IMR-90 (cell line): ENCODE measurements at regions of chr5 and their contacts with region 1.

Region 1: GRCh38 chr5:142611154-142611553 is 74.7 kb downstream of the FGF1 start:
- DNase-seq: peak; percentile 74
- ATAC-seq: peak; percentile 86
- H3K4me3 ChIP-seq: no peak overlapping the region
- H3K27ac ChIP-seq: no peak overlapping the region
- H3K4me1 ChIP-seq: peaks cover 16% of the 10 kb centered on the region
- H3K27me3 ChIP-seq: no peaks in the 10 kb centered on the region
- CTCF ChIP-seq: peak; percentile 96
- POLR2A ChIP-seq: peak; percentile 36; the same call in 1 of the 2 replicates
- RAD21 ChIP-seq: peak; percentile 96

Region 2: DNA sequence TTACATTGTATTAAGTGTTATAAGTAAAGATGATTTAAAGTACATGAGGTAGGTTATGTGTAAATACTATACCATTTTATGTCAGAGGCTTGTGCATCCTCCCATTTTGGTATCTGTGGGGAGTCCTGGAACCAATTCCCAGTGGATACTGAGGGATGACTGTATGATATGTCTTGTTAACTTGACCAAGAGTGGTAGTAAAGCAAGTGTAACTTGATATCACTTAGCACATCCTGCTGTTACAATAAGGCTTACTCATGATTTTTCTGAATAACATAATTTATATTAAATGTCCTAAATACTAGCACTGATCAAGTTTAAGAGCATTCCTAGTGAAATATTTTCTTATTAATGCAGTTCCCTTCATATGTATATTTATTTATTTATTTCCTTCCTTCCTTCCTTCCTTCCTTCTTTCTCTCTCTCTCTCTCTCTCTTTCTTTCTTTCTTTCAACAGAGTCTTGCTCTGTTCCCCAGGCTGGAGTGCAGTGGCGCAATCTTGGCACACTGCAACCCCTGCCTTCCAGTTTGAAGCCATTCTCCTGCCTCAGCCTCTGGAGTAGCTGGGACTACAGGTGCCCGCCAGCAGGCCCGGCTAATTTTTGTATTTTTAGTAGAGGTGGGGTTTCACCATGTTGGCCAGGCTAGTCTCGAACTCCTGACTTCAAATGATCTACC is 495.1 kb before region 1 on chr5:
- CTCF ChIA-PET with region 1: no interaction called
- POLR2A ChIA-PET with region 1: no interaction called
- dilution Hi-C with region 1: no loop called
- in situ Hi-C with region 1: no loop called
- intact Hi-C with region 1: no loop called
- DNase-seq: peak; percentile 79
- ATAC-seq: peak; percentile 83
- H3K4me3 ChIP-seq: no peak overlapping the region
- H3K27ac ChIP-seq: no peak overlapping the region
- H3K4me1 ChIP-seq: peaks cover 4% of the 10 kb centered on the region; the same call in 1 of the 2 replicates
- H3K27me3 ChIP-seq: no peaks in the 10 kb centered on the region
- CTCF ChIP-seq: no peak
- POLR2A ChIP-seq: no peak
- RAD21 ChIP-seq: no peak

Region 3: DNA sequence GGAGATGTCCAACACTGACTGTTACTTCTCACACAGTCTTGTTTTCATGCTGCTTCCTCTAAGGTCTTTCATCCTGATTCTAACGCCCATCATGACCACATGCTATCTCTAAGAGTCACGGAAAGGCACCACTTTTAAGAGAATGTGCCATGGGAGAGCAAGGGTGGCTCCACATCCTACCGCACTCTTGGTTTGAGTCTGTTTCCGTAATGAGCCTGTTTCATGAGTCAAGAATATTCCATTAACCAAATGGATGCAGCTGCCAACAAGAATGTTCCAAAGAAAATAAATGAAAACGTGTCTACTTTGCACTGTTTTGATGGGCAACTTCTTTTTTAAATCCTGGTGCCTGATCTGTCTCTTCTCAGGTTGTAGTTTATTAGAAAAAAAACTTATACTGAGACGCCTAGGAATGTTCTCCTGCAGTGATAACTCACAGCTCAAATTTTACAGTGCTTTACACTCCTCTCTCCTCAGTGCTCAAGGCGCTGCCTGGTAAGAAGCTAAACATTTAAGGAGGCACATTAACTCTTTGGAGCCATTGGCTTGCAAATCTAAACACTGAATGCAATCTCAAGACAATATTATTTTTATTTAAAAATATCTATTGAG is 49.6 kb before region 1 on chr5:
- CTCF ChIA-PET with region 1: no interaction called
- POLR2A ChIA-PET with region 1: no interaction called
- dilution Hi-C with region 1: no loop called
- in situ Hi-C with region 1: no loop called
- intact Hi-C with region 1: no loop called
- DNase-seq: peak; percentile 27
- ATAC-seq: peak; percentile 65
- H3K4me3 ChIP-seq: no peak overlapping the region
- H3K27ac ChIP-seq: no peak overlapping the region
- H3K4me1 ChIP-seq: peaks cover 7% of the 10 kb centered on the region
- H3K27me3 ChIP-seq: no peaks in the 10 kb centered on the region
- CTCF ChIP-seq: no peak
- POLR2A ChIP-seq: no peak
- RAD21 ChIP-seq: no peak

Region 4: GRCh38 chr5:142699184-142699720 is 88.1 kb after region 1 on chr5:
- CTCF ChIA-PET with region 1: interaction called, 5 read pairs
- POLR2A ChIA-PET with region 1: no interaction called
- dilution Hi-C with region 1: no loop called
- in situ Hi-C with region 1: loop called (anchors 5 kb)
- intact Hi-C with region 1: loop called (anchors 1 kb)
- DNase-seq: peak; percentile 84
- ATAC-seq: peak; percentile 98
- H3K4me3 ChIP-seq: no peak overlapping the region
- H3K27ac ChIP-seq: no peak overlapping the region
- H3K4me1 ChIP-seq: peaks cover 10% of the 10 kb centered on the region
- H3K27me3 ChIP-seq: no peaks in the 10 kb centered on the region
- CTCF ChIP-seq: peak; percentile 99
- POLR2A ChIP-seq: peak; percentile 69
- RAD21 ChIP-seq: peak; percentile 100

Region 5: GRCh38 chr5:142881076-142881783 is 270.1 kb after region 1 on chr5:
- CTCF ChIA-PET with region 1: no interaction called
- POLR2A ChIA-PET with region 1: no interaction called
- dilution Hi-C with region 1: no loop called
- in situ Hi-C with region 1: loop called (anchors 10 kb)
- intact Hi-C with region 1: loop called (anchors 5 kb)
- DNase-seq: peak; percentile 91
- ATAC-seq: peak; percentile 84
- H3K4me3 ChIP-seq: no peak overlapping the region
- H3K27ac ChIP-seq: no peak overlapping the region
- H3K4me1 ChIP-seq: peaks cover 5% of the 10 kb centered on the region
- H3K27me3 ChIP-seq: no peaks in the 10 kb centered on the region; the same call in 1 of the 2 replicates
- CTCF ChIP-seq: no peak
- POLR2A ChIP-seq: no peak
- RAD21 ChIP-seq: no peak